ENCODE measurements at regions of chr15 and their contacts with region 1.

Region 1: DNA sequence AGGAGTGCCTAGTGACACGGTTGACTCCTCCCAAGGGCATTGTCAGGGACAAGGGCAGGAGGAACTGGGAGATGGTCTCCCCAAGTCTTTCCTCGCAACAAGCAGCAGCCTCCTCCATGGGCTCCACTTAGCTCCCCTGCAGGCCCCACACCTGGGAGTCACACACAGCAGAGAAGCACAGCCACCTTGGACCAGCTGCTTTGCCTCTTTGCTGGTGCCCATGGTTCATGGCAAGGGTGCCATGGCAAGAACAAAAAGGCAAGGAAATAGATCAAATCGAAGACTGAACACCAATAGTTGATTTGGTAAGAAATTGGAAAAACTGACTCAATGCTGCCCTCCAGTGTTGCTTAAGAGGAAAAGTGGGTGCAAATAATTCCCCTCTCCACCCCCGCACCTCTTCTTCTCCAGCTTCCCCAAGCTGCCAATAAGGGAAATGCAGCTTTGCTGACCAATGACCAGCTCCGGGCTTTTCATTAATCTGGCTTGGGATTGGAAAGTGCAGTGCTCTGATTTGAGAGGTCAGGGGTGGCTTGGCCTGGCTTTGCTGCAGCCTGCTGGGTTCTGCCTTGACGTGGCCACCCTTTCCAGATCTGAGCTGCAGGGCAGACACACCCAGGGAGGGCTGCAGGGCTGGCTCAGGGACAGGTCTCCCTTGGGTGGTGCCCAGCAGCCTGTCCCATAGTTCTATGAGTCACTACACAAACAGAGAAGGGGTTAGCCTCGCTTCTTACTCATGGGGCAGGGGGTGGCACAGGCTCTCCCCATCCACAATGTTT is 162.0 kb downstream of the KLF13 start:
- DNase-seq: peak; percentile 85
- ATAC-seq: peak; percentile 69
- H3K4me3 ChIP-seq: no peak overlapping the region
- H3K4me3 Mint-ChIP-seq: no peak overlapping the region
- H3K27ac ChIP-seq: no peak overlapping the region
- H3K27ac Mint-ChIP-seq: peak overlapping the region; percentile 15
- H3K4me1 ChIP-seq: peaks cover 11 to 25% of the 10 kb centered on the region in 2 donors
- H3K4me1 Mint-ChIP-seq: peaks cover 23% of the 10 kb centered on the region
- H3K27me3 ChIP-seq: peaks cover 0 to 14% (median 5%) of the 10 kb centered on the region in 4 experiments
- H3K27me3 Mint-ChIP-seq: peaks cover 9% of the 10 kb centered on the region
- CTCF ChIP-seq: peak; percentile 86

Region 2: GRCh38 chr15:31200735-31201151 is 287.9 kb before region 1 on chr15:
- CTCF ChIA-PET with region 1: interaction called, 70 read pairs
- POLR2A ChIA-PET with region 1: no interaction called
- intact Hi-C with region 1: loop called (anchors 1 kb)
- DNase-seq: peak; percentile 63
- ATAC-seq: peak; percentile 69
- H3K4me3 ChIP-seq: no peak overlapping the region
- H3K4me3 Mint-ChIP-seq: no peak overlapping the region
- H3K27ac ChIP-seq: no peak overlapping the region
- H3K27ac Mint-ChIP-seq: no peak overlapping the region
- H3K4me1 ChIP-seq: peaks cover 0 to 4% of the 10 kb centered on the region in 2 donors
- H3K4me1 Mint-ChIP-seq: peaks cover 8% of the 10 kb centered on the region
- H3K27me3 ChIP-seq: peaks cover 0 to 4% (median 2%) of the 10 kb centered on the region in 4 experiments
- H3K27me3 Mint-ChIP-seq: peaks cover 5% of the 10 kb centered on the region
- CTCF ChIP-seq: peak; percentile 26

Region 3: GRCh38 chr15:31265871-31266711 is 222.5 kb before region 1 on chr15:
- CTCF ChIA-PET with region 1: interaction called, 58 read pairs
- POLR2A ChIA-PET with region 1: no interaction called
- intact Hi-C with region 1: loop called (anchors 5 kb)
- DNase-seq: peak; percentile 80
- ATAC-seq: peak; percentile 64
- H3K4me3 ChIP-seq: peak overlapping the region in 4 of 5 experiments; percentile 2 to 37 (median 4)
- H3K4me3 Mint-ChIP-seq: peak overlapping the region; percentile 79
- H3K27ac ChIP-seq: peak overlapping the region; percentile 78 to 90
- H3K27ac Mint-ChIP-seq: peak overlapping the region; percentile 96
- H3K4me1 ChIP-seq: peaks cover 70 to 79% of the 10 kb centered on the region in 2 donors
- H3K4me1 Mint-ChIP-seq: peaks cover 79% of the 10 kb centered on the region
- H3K27me3 ChIP-seq: no peaks in the 10 kb centered on the region
- H3K27me3 Mint-ChIP-seq: no peaks in the 10 kb centered on the region
- CTCF ChIP-seq: no peak

Region 4: GRCh38 chr15:31344823-31345605 is 143.6 kb before region 1 on chr15:
- CTCF ChIA-PET with region 1: interaction called, 5 read pairs
- POLR2A ChIA-PET with region 1: interaction called, 7 read pairs
- intact Hi-C with region 1: loop called (anchors 5 kb)
- DNase-seq: no peak
- ATAC-seq: peak; percentile 62
- H3K4me3 ChIP-seq: peak overlapping the region in 4 of 5 experiments; percentile 42 to 70 (median 58)
- H3K4me3 Mint-ChIP-seq: peak overlapping the region; percentile 95
- H3K27ac ChIP-seq: peak overlapping the region; percentile 90 to 97
- H3K27ac Mint-ChIP-seq: peak overlapping the region; percentile 99
- H3K4me1 ChIP-seq: peaks cover 100% of the 10 kb centered on the region in 2 donors
- H3K4me1 Mint-ChIP-seq: peaks cover 99% of the 10 kb centered on the region
- H3K27me3 ChIP-seq: no peaks in the 10 kb centered on the region
- H3K27me3 Mint-ChIP-seq: no peaks in the 10 kb centered on the region
- CTCF ChIP-seq: no peak

Region 5: GRCh38 chr15:31379042-31379441 is 109.6 kb before region 1 on chr15:
- CTCF ChIA-PET with region 1: interaction called, 10 read pairs
- POLR2A ChIA-PET with region 1: no interaction called
- intact Hi-C with region 1: no loop called
- DNase-seq: no peak
- ATAC-seq: peak; percentile 55
- H3K4me3 ChIP-seq: no peak overlapping the region
- H3K4me3 Mint-ChIP-seq: no peak overlapping the region
- H3K27ac ChIP-seq: peak overlapping the region in 1 of 2 donors; percentile 56
- H3K27ac Mint-ChIP-seq: peak overlapping the region; percentile 67
- H3K4me1 ChIP-seq: peaks cover 21 to 26% of the 10 kb centered on the region in 2 donors
- H3K4me1 Mint-ChIP-seq: peaks cover 46% of the 10 kb centered on the region
- H3K27me3 ChIP-seq: no peaks in the 10 kb centered on the region
- H3K27me3 Mint-ChIP-seq: no peaks in the 10 kb centered on the region
- CTCF ChIP-seq: no peak

Region 6: GRCh38 chr15:31435261-31435911 is 53.2 kb before region 1 on chr15:
- CTCF ChIA-PET with region 1: interaction called, 326 read pairs
- POLR2A ChIA-PET with region 1: interaction called, 8 read pairs
- intact Hi-C with region 1: loop called (anchors 1 kb)
- DNase-seq: peak; percentile 87
- ATAC-seq: peak; percentile 76
- H3K4me3 ChIP-seq: peak overlapping the region; percentile 21 to 67 (median 41)
- H3K4me3 Mint-ChIP-seq: peak overlapping the region; percentile 85
- H3K27ac ChIP-seq: peak overlapping the region; percentile 52 to 86
- H3K27ac Mint-ChIP-seq: peak overlapping the region; percentile 91
- H3K4me1 ChIP-seq: peaks cover 48 to 52% of the 10 kb centered on the region in 2 donors
- H3K4me1 Mint-ChIP-seq: peaks cover 60% of the 10 kb centered on the region
- H3K27me3 ChIP-seq: no peaks in the 10 kb centered on the region
- H3K27me3 Mint-ChIP-seq: no peaks in the 10 kb centered on the region
- CTCF ChIP-seq: peak; percentile 71

Region 7: DNA sequence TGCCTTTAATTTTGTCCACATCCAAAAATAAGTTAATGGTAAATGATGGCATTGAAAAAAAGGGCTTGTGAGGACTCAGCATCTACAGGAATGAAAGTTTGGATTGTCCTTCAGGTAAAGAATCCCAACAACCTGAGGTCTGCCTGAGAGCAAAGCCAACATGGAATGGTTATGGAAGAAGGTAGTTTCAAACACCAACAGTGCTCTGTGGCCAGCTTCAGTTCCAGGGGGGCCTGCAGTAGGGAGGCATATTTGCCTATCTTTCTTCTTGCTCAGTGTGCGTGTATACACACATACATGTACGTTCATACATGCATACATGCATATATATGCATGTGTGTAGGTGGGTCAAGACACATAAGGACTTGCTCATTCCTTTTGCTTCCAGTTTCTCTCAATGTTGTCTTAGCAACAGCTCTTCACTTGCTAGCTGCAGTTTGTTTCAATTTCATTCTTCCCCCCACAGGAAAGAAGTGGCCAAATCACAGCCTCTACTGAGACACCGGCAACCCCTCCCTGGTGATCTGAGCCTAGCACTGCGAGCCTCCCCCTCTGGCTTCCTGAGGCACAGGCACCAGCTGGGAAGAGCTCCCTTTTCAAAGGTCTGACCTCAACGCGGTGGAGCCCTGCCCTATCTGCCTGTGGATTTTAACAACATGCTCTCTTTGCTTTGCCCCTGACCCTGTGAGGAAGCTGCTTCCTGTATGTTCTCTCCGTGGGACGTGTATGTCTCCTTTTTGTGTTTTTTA is 15.8 kb before region 1 on chr15:
- CTCF ChIA-PET with region 1: interaction called, 75 read pairs
- POLR2A ChIA-PET with region 1: no interaction called
- intact Hi-C with region 1: loop called (anchors 1 kb)
- DNase-seq: peak; percentile 79
- ATAC-seq: peak; percentile 88
- H3K4me3 ChIP-seq: peak overlapping the region in 4 of 5 experiments; percentile 37 to 61 (median 55)
- H3K4me3 Mint-ChIP-seq: peak overlapping the region; percentile 85
- H3K27ac ChIP-seq: peak overlapping the region; percentile 86 to 88
- H3K27ac Mint-ChIP-seq: peak overlapping the region; percentile 92
- H3K4me1 ChIP-seq: peaks cover 30 to 41% of the 10 kb centered on the region in 2 donors
- H3K4me1 Mint-ChIP-seq: peaks cover 51% of the 10 kb centered on the region
- H3K27me3 ChIP-seq: no peaks in the 10 kb centered on the region
- H3K27me3 Mint-ChIP-seq: no peaks in the 10 kb centered on the region
- CTCF ChIP-seq: no peak

Region 8: GRCh38 chr15:31511707-31512310 is 23.2 kb after region 1 on chr15:
- CTCF ChIA-PET with region 1: no interaction called
- POLR2A ChIA-PET with region 1: no interaction called
- intact Hi-C with region 1: no loop called
- DNase-seq: peak; percentile 68
- ATAC-seq: no peak
- H3K4me3 ChIP-seq: no peak overlapping the region
- H3K4me3 Mint-ChIP-seq: no peak overlapping the region
- H3K27ac ChIP-seq: no peak overlapping the region
- H3K27ac Mint-ChIP-seq: no peak overlapping the region
- H3K4me1 ChIP-seq: peaks cover 7 to 9% of the 10 kb centered on the region in 2 donors
- H3K4me1 Mint-ChIP-seq: peaks cover 10% of the 10 kb centered on the region
- H3K27me3 ChIP-seq: peaks cover 0 to 7% (median 0%) of the 10 kb centered on the region in 4 experiments
- H3K27me3 Mint-ChIP-seq: peaks cover 22% of the 10 kb centered on the region
- CTCF ChIP-seq: no peak

Measured in B cell (primary cell).